B cell (primary cell): ENCODE measurements at regions of chr11 and their contacts with region 1.

Region 1: GRCh38 chr11:128884703-128885338 is 6.3 kb upstream of the KCNJ5 start:
- DNase-seq: peak; percentile 79
- ATAC-seq: peak; percentile 82
- H3K4me3 ChIP-seq: no peak overlapping the region
- H3K4me3 Mint-ChIP-seq: no peak overlapping the region
- H3K27ac ChIP-seq: no peak overlapping the region
- H3K27ac Mint-ChIP-seq: peak overlapping the region; percentile 54
- H3K4me1 ChIP-seq: peaks cover under 1 to 7% of the 10 kb centered on the region in 2 donors
- H3K4me1 Mint-ChIP-seq: peaks cover 3% of the 10 kb centered on the region
- H3K27me3 ChIP-seq: peaks cover 0 to 73% (median 48%) of the 10 kb centered on the region in 4 experiments
- H3K27me3 Mint-ChIP-seq: peaks cover 78% of the 10 kb centered on the region
- CTCF ChIP-seq: peak; percentile 85

Region 2: DNA sequence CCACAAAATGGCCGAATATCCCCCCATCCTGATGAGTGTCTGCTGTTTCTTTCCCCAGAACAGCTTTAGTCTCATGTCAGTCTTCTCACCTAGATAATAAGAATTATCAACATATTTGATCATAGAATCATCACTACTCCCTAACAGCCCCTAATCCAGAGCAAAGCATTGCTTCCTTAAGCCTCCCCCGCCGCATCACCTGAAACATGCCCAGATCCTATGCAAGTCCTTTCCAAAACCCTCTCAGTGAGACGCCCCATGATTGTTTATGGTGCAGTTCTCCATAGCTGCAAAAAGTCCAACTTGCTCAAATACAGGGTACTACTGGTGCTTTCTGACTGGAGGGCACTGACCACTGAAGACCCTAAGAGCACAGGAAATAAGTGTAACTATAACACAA is 37.8 kb before region 1 on chr11:
- CTCF ChIA-PET with region 1: no interaction called
- POLR2A ChIA-PET with region 1: no interaction called
- intact Hi-C with region 1: no loop called
- DNase-seq: no peak
- ATAC-seq: no peak
- H3K4me3 ChIP-seq: no peak overlapping the region
- H3K4me3 Mint-ChIP-seq: peak overlapping the region; percentile 2
- H3K27ac ChIP-seq: no peak overlapping the region
- H3K27ac Mint-ChIP-seq: peak overlapping the region; percentile 97
- H3K4me1 ChIP-seq: peaks cover 59 to 72% of the 10 kb centered on the region in 2 donors
- H3K4me1 Mint-ChIP-seq: peaks cover 66% of the 10 kb centered on the region
- H3K27me3 ChIP-seq: no peaks in the 10 kb centered on the region
- H3K27me3 Mint-ChIP-seq: no peaks in the 10 kb centered on the region
- CTCF ChIP-seq: no peak

Region 3: DNA sequence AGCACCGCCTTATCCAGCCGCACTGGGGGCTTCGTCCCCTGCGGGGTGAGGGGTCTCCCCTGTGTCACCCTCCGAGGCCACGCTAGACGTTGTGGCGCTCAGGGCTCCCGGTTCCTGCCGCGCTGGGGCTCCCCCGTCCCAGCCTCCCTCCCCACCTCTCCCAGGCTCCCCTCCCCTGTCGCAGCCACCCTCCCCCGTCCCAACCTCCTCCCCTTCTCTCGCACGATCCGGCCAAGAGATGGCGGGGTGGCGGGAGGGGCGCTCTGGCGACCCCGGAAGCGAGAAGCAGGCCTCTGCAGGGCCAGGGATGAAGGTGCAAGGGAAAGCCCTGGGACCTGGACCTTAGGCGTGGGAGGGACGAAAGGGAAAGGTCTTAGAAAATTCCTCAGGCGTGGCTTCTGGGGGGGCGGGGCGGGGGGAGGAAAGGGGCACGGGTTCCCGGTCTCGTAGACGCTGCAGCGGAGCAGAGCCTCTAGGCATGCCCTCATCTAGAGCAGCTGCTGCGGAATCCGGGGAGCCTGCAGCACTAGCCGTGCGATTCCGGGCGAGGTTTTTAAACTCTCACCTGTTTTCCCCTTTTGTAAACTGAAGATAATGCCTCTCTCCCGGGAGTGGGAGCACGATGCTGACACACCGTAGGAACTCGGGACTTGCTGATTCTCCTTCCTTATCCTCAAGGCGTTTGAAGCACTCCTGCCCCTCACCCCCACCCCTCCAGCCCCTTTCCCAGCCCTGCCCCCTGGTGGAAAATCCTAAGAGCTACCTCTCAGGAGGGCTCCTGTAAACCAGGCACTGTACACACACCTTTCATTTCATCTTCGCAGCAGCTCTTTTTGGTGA is 20.7 kb after region 1 on chr11:
- CTCF ChIA-PET with region 1: interaction called, 89 read pairs
- POLR2A ChIA-PET with region 1: interaction called, 3 read pairs
- intact Hi-C with region 1: loop called (anchors 1 kb)
- DNase-seq: peak; percentile 60
- ATAC-seq: peak; percentile 57
- H3K4me3 ChIP-seq: peak overlapping the region; percentile 8 to 81 (median 59)
- H3K4me3 Mint-ChIP-seq: peak overlapping the region; percentile 81
- H3K27ac ChIP-seq: no peak overlapping the region
- H3K27ac Mint-ChIP-seq: peak overlapping the region; percentile 50
- H3K4me1 ChIP-seq: peaks cover 21 to 28% of the 10 kb centered on the region in 2 donors
- H3K4me1 Mint-ChIP-seq: peaks cover 26% of the 10 kb centered on the region
- H3K27me3 ChIP-seq: peaks cover 0 to 92% (median 57%) of the 10 kb centered on the region in 4 experiments
- H3K27me3 Mint-ChIP-seq: peaks cover 69% of the 10 kb centered on the region
- CTCF ChIP-seq: peak; percentile 60

Region 4: GRCh38 chr11:128948589-128948988 is 63.8 kb after region 1 on chr11:
- CTCF ChIA-PET with region 1: interaction called, 315 read pairs
- POLR2A ChIA-PET with region 1: no interaction called
- intact Hi-C with region 1: no loop called
- DNase-seq: no peak
- ATAC-seq: no peak
- H3K4me3 ChIP-seq: no peak overlapping the region
- H3K4me3 Mint-ChIP-seq: no peak overlapping the region
- H3K27ac ChIP-seq: no peak overlapping the region
- H3K27ac Mint-ChIP-seq: no peak overlapping the region
- H3K4me1 ChIP-seq: no peaks in the 10 kb centered on the region
- H3K4me1 Mint-ChIP-seq: no peaks in the 10 kb centered on the region
- H3K27me3 ChIP-seq: peaks cover 0 to 25% (median 7%) of the 10 kb centered on the region in 4 experiments
- H3K27me3 Mint-ChIP-seq: peaks cover 39% of the 10 kb centered on the region
- CTCF ChIP-seq: no peak

Region 5: DNA sequence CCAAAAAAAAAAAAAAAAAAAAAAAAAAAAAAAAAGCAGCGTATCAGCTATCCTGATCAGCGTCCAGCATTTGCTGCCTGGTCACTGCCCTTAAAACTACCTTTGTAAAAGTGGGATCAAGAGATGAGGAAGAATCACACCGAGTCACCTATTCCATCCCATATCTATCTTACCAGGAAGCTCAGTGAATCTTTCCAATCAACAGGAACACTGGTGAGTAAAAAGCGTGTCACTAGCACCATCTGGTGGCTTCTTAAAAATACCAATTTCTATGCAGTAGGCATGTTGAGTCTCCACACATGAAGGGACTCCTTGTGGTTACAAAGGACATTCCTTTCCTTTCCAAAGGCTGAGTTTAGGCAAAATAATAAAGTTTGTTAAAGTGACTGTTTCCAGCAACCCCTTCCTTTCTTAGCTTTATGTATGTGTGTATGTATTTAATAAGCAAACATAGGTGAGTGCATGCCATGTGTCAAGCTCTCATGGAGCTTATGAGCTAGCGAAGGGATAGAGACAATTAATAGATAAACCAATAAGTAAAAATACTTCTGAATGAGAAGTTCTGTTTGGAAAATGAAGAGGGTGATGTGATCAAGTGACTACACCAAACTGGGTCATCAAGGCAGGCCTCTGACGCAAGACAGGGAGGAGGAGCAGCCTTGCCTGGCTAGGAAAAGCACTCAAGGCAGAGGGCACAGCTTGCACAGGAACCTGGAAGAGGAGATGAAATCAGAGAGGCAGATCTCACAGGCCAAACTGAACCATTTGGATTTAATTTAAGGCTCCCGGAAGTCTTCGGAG is 71.8 kb after region 1 on chr11:
- CTCF ChIA-PET with region 1: interaction called, 315 read pairs
- POLR2A ChIA-PET with region 1: no interaction called
- intact Hi-C with region 1: loop called (anchors 1 kb)
- DNase-seq: peak; percentile 73
- ATAC-seq: no peak
- H3K4me3 ChIP-seq: no peak overlapping the region
- H3K4me3 Mint-ChIP-seq: no peak overlapping the region
- H3K27ac ChIP-seq: no peak overlapping the region
- H3K27ac Mint-ChIP-seq: no peak overlapping the region
- H3K4me1 ChIP-seq: peaks cover 0 to 4% of the 10 kb centered on the region in 2 donors
- H3K4me1 Mint-ChIP-seq: peaks cover 2% of the 10 kb centered on the region
- H3K27me3 ChIP-seq: peaks cover 0 to 13% (median 1%) of the 10 kb centered on the region in 4 experiments
- H3K27me3 Mint-ChIP-seq: peaks cover 30% of the 10 kb centered on the region
- CTCF ChIP-seq: peak; percentile 86

Region 6: DNA sequence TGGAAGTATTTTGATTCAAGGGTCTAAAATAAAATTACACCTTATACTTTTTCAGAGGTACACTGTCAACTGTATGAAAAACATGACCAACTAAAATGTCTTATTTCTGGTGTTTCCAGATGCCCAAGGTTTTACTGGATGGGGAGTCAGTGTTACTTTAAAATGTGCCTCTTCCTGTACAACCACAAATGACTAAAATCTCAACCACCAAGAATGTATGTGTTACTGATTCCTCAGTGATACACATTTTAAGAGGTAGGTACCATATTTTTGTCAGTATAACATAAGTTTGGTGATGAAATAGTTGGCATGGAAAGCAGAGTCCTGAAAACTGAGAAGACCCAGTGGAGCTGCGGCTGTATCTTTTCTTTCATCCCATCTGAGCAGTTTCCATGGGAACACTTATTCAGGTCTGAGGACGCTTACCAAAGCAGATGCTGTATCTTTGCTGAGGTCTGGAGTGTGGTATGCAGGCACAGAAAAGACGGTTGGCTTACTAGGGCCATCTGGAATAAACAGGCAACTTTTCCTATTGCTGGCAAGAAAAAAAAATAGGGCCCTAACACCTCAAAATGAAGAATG is 79.0 kb after region 1 on chr11:
- CTCF ChIA-PET with region 1: interaction called, 315 read pairs
- POLR2A ChIA-PET with region 1: no interaction called
- intact Hi-C with region 1: no loop called
- DNase-seq: no peak
- ATAC-seq: no peak
- H3K4me3 ChIP-seq: no peak overlapping the region
- H3K4me3 Mint-ChIP-seq: no peak overlapping the region
- H3K27ac ChIP-seq: no peak overlapping the region
- H3K27ac Mint-ChIP-seq: no peak overlapping the region
- H3K4me1 ChIP-seq: peaks cover 6 to 7% of the 10 kb centered on the region in 2 donors
- H3K4me1 Mint-ChIP-seq: peaks cover 12% of the 10 kb centered on the region
- H3K27me3 ChIP-seq: peaks cover 0 to 3% (median 0%) of the 10 kb centered on the region in 4 experiments
- H3K27me3 Mint-ChIP-seq: peaks cover 6% of the 10 kb centered on the region
- CTCF ChIP-seq: no peak